CD4-positive, alpha-beta T cell (primary cell): ENCODE measurements at regions of chr3 and their contacts with region 1.

Region 1: GRCh38 chr3:100184948-100185570 is 70.8 kb upstream of the FILIP1L start:
- DNase-seq: no peak
- ATAC-seq: no peak
- H3K4me3 ChIP-seq: no peak overlapping the region
- H3K4me3 Mint-ChIP-seq: no peak overlapping the region
- H3K27ac ChIP-seq: no peak overlapping the region
- H3K27ac Mint-ChIP-seq: no peak overlapping the region
- H3K4me1 ChIP-seq: no peaks in the 10 kb centered on the region
- H3K4me1 Mint-ChIP-seq: no peaks in the 10 kb centered on the region
- H3K27me3 ChIP-seq: no peaks in the 10 kb centered on the region
- H3K27me3 Mint-ChIP-seq: no peaks in the 10 kb centered on the region
- CTCF ChIP-seq: no peak

Region 2: DNA sequence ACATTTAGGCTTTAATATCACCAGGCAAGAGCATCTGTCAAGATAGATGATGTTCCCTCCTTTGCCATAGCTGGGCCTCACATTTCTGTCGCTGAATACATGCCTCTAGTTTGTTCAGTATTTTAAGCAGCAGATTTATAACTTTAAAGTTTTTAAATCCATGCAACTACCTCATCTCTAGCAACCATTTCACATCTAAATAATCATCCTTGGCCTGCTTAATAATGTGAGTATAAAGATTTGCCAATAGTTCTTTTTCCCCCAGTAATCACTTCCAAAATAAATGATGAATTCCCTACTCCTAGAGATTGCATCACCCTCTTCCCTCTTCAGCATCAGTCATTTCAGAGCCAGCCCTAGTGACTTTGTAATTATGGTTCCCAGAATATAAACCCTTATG is 34.6 kb before region 1 on chr3:
- CTCF ChIA-PET with region 1: no interaction called
- POLR2A ChIA-PET with region 1: no interaction called
- intact Hi-C with region 1: no loop called
- DNase-seq: no peak
- ATAC-seq: no peak
- H3K4me3 ChIP-seq: no peak overlapping the region
- H3K4me3 Mint-ChIP-seq: no peak overlapping the region
- H3K27ac ChIP-seq: no peak overlapping the region
- H3K27ac Mint-ChIP-seq: no peak overlapping the region
- H3K4me1 ChIP-seq: no peaks in the 10 kb centered on the region
- H3K4me1 Mint-ChIP-seq: no peaks in the 10 kb centered on the region
- H3K27me3 ChIP-seq: no peaks in the 10 kb centered on the region
- H3K27me3 Mint-ChIP-seq: no peaks in the 10 kb centered on the region
- CTCF ChIP-seq: no peak

Region 3: GRCh38 chr3:100207886-100208285 is 22.8 kb after region 1 on chr3:
- CTCF ChIA-PET with region 1: no interaction called
- POLR2A ChIA-PET with region 1: no interaction called
- intact Hi-C with region 1: loop called in 1 of 2 experiments (anchors 2 kb)
- DNase-seq: no peak
- ATAC-seq: no peak
- H3K4me3 ChIP-seq: no peak overlapping the region
- H3K4me3 Mint-ChIP-seq: no peak overlapping the region
- H3K27ac ChIP-seq: no peak overlapping the region
- H3K27ac Mint-ChIP-seq: no peak overlapping the region
- H3K4me1 ChIP-seq: peaks cover 5% of the 10 kb centered on the region
- H3K4me1 Mint-ChIP-seq: peaks cover 23% of the 10 kb centered on the region
- H3K27me3 ChIP-seq: no peaks in the 10 kb centered on the region
- H3K27me3 Mint-ChIP-seq: no peaks in the 10 kb centered on the region
- CTCF ChIP-seq: no peak